Esophagus muscularis mucosa (tissue), 4 donors: ENCODE measurements at regions of chr10 and their contacts with region 1.

Region 1: DNA sequence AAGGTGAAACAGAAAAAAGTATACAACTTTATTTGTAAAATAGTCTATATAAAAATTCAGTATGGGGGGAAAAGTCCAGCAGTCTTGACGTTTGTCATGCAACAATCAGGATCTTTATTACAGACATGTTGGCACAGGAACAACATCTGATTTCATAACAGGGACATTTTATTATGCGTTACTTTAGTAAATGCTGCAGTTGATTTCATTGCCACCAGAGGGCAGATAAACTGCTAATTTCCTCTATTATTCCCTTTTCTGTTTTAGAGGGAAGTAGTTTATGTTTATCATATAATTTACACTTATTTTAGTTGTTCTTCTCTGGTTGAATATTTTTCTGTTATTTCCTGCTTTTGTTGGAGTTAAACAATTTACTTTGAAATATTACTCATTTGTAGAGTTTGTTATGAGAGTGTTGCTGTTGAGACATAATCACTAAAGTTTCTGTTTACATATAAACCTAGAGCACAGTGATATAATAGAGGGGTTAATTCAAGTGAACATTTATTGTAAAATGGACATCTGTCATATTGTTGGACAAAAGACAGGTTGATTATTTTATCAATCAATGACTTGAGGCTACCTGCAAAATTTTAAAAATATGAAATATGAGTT is 3.3 kb downstream of the PLXDC2 start:
- DNase-seq: no peak
- H3K4me3 ChIP-seq: peak overlapping the region; percentile 65 to 92 (median 87)
- H3K27ac ChIP-seq: peak overlapping the region; percentile 39 to 87 (median 68)
- H3K4me1 ChIP-seq: peaks cover 4 to 47% (median 38%) of the 10 kb centered on the region in 4 donors
- H3K27me3 ChIP-seq: peaks cover 0 to 4% (median 0%) of the 10 kb centered on the region in 4 donors
- CTCF ChIP-seq: peak; percentile 72 to 88 (median 86)
- EP300 ChIP-seq: no peak
- POLR2A ChIP-seq: no peak

Region 2: DNA sequence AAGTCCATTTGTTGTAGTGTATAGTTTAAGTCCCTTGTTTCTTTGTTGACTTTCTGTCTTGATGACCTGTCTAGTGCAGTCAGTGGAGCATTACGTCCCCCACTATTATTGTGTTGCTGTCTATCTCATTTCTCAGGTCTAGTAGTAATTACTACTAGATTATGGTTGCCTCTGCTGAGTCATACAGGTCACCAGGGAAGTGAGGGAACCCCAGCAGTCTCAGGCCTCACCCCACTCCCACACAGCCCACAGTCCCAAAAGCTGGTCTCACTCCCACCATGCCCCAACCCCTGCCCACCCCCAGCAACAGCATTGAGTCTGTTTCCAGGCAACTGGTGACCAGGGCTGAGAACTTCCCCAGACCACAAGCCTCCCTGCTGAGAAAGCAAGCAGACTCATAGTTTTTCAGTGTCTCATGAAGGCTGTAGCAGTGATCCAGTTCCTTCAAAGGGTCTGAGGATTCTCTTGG is 84.7 kb after region 1 on chr10:
- intact Hi-C with region 1: no loop called
- DNase-seq: no peak
- H3K4me3 ChIP-seq: no peak overlapping the region
- H3K27ac ChIP-seq: no peak overlapping the region
- H3K4me1 ChIP-seq: peaks cover 0 to 5% (median 0%) of the 10 kb centered on the region in 4 donors
- H3K27me3 ChIP-seq: no peaks in the 10 kb centered on the region
- CTCF ChIP-seq: no peak
- EP300 ChIP-seq: no peak
- POLR2A ChIP-seq: no peak

Region 3: GRCh38 chr10:19922236-19922963 is 102.9 kb after region 1 on chr10:
- intact Hi-C with region 1: loop called (anchors 5 kb)
- DNase-seq: no peak
- H3K4me3 ChIP-seq: no peak overlapping the region
- H3K27ac ChIP-seq: peak overlapping the region; percentile 39 to 75 (median 68)
- H3K4me1 ChIP-seq: peaks cover 31 to 57% (median 53%) of the 10 kb centered on the region in 4 donors
- H3K27me3 ChIP-seq: no peaks in the 10 kb centered on the region
- CTCF ChIP-seq: no peak
- EP300 ChIP-seq: no peak
- POLR2A ChIP-seq: no peak

Region 4: DNA sequence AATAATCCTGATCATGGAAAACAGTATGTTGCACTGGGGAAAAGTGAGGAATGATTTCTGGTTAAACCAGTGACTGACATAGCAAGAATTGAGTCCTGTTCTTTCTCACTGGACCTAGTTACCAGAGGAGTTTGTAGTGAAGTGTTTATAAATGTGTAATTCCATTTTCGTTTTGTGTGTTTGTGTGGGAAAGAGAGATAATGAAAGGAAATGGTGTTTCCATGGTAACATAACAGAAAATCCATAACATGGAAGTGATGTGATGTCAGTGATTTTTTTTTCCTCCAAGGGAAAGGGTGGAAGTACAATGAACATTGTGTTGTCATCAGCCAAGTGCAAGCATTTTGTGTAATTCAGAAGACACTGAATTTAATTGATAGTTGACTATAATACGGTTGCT is 280.6 kb after region 1 on chr10:
- intact Hi-C with region 1: loop called (anchors 10 kb)
- DNase-seq: no peak
- H3K4me3 ChIP-seq: peak overlapping the region in 1 of 4 donors; percentile 13
- H3K27ac ChIP-seq: peak overlapping the region; percentile 5 to 42 (median 30)
- H3K4me1 ChIP-seq: peaks cover 0 to 28% (median 22%) of the 10 kb centered on the region in 4 donors
- H3K27me3 ChIP-seq: no peaks in the 10 kb centered on the region
- CTCF ChIP-seq: no peak
- EP300 ChIP-seq: no peak
- POLR2A ChIP-seq: no peak

Region 5: DNA sequence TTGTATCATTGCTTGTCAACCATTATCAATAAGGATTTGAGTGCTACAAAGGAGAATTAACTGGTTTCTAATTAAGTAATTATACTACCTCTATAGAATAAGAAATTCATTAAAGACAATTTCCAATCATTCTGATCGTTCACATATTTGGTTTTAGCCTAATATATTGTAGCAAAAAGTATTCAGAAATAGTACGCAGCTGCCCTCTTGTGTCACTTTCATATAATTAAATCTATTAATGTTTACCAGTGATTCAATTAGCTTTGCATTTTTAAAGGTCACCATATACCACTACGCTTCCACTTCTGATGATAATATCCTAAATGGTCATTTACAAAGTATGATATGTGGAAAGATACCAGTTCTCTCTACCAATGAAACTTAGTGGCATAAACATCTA is 949.3 kb after region 1 on chr10:
- intact Hi-C with region 1: loop called (anchors 5 kb)
- DNase-seq: no peak
- H3K4me3 ChIP-seq: no peak overlapping the region
- H3K27ac ChIP-seq: no peak overlapping the region
- H3K4me1 ChIP-seq: peaks cover 0 to 24% (median 21%) of the 10 kb centered on the region in 4 donors
- H3K27me3 ChIP-seq: no peaks in the 10 kb centered on the region
- CTCF ChIP-seq: peak; percentile 16 to 40 (median 22)
- EP300 ChIP-seq: no peak
- POLR2A ChIP-seq: no peak

Region 6: GRCh38 chr10:20858292-20859124 is 1039.0 kb after region 1 on chr10:
- intact Hi-C with region 1: loop called (anchors 10 kb)
- DNase-seq: no peak
- H3K4me3 ChIP-seq: no peak overlapping the region
- H3K27ac ChIP-seq: no peak overlapping the region
- H3K4me1 ChIP-seq: no peaks in the 10 kb centered on the region
- H3K27me3 ChIP-seq: no peaks in the 10 kb centered on the region
- CTCF ChIP-seq: peak; percentile 27 to 41 (median 39)
- EP300 ChIP-seq: no peak
- POLR2A ChIP-seq: no peak